ENCODE measurements at regions of chr1 and their contacts with region 1.

Region 1: DNA sequence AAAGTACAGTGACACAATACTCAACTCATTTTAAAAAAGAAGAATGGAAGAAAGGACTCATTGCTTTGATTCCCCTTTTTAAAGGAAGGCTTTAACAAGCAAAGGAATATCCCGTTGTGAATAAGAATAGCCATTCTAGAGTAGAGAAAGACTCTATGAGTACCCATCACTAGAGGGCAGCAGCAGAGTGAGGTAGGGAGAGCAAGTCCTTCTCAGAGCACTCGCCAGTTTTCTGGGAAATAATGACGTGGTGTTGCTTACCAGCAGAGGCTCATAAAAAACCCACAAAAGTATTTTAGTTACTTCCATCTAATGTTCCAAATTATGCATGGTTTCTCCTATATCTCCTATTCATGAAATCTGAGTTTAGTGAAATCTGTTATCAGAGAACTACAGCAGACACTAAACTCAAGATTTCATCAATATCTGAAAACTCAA is 74.6 kb downstream of the USP24 start:
- DNase-seq: peak; percentile 91
- ATAC-seq: peak; percentile 100
- H3K4me3 ChIP-seq: no peak overlapping the region
- H3K27ac ChIP-seq: no peak overlapping the region
- H3K4me1 ChIP-seq: no peaks in the 10 kb centered on the region
- H3K27me3 ChIP-seq: no peaks in the 10 kb centered on the region
- CTCF ChIP-seq: peak; percentile 89
- POLR2A ChIP-seq: 0 out of 2 replicates have a peak, but pooled peaks have one; percentile 38
- RAD21 ChIP-seq: peak; percentile 89

Region 2: DNA sequence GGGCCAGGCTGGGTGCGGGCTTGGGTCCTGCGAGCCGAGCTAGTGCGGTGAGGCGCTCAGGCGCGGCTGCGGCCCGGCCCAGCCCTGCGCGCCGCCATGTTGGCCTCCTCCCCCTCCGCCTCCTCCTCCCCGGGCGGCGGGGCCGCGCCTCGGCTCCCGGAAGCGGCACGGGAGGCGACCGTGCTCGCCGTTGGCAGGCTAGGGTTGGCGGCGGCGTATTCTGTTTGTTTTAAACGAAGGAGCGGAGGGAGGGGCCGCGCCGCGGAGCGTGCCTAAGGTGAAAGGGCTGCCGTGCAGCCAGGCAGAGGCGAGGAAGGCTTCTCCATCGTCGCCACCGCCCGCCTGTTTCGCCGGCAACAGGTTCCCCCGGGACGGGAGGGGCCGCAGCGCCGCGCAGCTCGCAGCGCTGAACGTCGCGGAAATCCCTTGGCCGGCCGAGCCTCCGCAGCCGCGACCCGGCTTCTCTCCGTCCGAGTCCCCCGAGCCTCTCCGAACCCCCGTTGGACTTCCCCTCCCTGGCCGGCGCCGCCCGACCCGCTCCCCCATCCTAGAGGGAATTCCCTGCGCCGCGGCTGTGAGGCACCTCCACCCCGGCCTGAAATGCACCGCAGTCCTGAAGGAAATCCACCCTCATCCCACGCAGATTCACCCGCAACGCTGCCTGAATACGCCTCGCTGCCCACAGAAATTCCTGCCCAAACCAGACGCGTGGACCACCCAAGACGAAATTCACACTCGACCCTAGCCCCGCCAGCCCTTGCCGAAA is 74.9 kb after region 1 on chr1 and contains the start of gene USP24:
- CTCF ChIA-PET with region 1: interaction called, 3 read pairs
- POLR2A ChIA-PET with region 1: no interaction called
- dilution Hi-C with region 1: no loop called
- in situ Hi-C with region 1: no loop called
- intact Hi-C with region 1: loop called (anchors 2 kb)
- DNase-seq: peak; percentile 59
- ATAC-seq: peak; percentile 90
- H3K4me3 ChIP-seq: peak within 1 kb of the TSS; percentile 99
- H3K27ac ChIP-seq: peak within 1 kb of the TSS; percentile 99
- H3K4me1 ChIP-seq: peaks cover 6% of the 10 kb centered on the region; the same call in 1 of the 2 replicates
- H3K27me3 ChIP-seq: no peaks in the 10 kb centered on the region
- CTCF ChIP-seq: no peak
- POLR2A ChIP-seq: peak; percentile 80
- RAD21 ChIP-seq: no peak
- total RNA-seq, gene USP24: 34.7 and 36.7 TPM in 2 replicates

Region 3: GRCh38 chr1:55670331-55671082 is 529.9 kb after region 1 on chr1:
- CTCF ChIA-PET with region 1: no interaction called
- POLR2A ChIA-PET with region 1: no interaction called
- dilution Hi-C with region 1: no loop called
- in situ Hi-C with region 1: no loop called
- intact Hi-C with region 1: loop called (anchors 10 kb)
- DNase-seq: peak; percentile 23
- ATAC-seq: peak; percentile 68
- H3K4me3 ChIP-seq: no peak overlapping the region
- H3K27ac ChIP-seq: peak overlapping the region; percentile 55; the same call in 1 of the 2 replicates
- H3K4me1 ChIP-seq: peaks cover 12% of the 10 kb centered on the region
- H3K27me3 ChIP-seq: no peaks in the 10 kb centered on the region
- CTCF ChIP-seq: no peak
- POLR2A ChIP-seq: no peak
- RAD21 ChIP-seq: no peak